ENCODE measurements at regions of chrX and their contacts with region 1.

Region 1: GRCh38 chrX:54029529-54030143 is 14.6 kb downstream of the PHF8 start:
- DNase-seq: no peak
- H3K4me3 ChIP-seq: no peak overlapping the region
- H3K27ac ChIP-seq: no peak overlapping the region
- H3K4me1 ChIP-seq: no peaks in the 10 kb centered on the region
- H3K27me3 ChIP-seq: no peaks in the 10 kb centered on the region
- CTCF ChIP-seq: no peak
- POLR2A ChIP-seq: no peak

Region 2: DNA sequence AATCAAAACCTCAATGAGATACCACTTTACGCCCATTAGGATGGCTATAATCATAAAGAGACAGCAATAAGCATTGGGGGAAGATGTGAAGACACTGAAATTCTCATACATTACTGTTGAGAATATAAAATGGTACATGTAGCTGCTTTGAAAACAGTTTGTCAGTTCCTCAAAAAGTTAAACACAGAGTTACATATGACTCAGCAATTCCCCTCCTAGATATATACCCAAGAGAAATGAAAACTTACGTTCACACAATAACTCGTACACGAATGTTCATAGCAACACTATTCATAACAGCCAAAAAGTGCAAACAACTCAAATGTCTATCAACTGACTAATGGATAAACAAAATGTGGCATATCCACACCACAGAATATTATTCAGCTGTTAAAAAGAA is 22.0 kb before region 1 on chrX:
- CTCF ChIA-PET with region 1: no interaction called
- POLR2A ChIA-PET with region 1: interaction called, 12 read pairs
- dilution Hi-C with region 1: no loop called
- intact Hi-C with region 1: no loop called
- DNase-seq: no peak
- H3K4me3 ChIP-seq: no peak overlapping the region
- H3K27ac ChIP-seq: no peak overlapping the region
- H3K4me1 ChIP-seq: no peaks in the 10 kb centered on the region
- H3K27me3 ChIP-seq: no peaks in the 10 kb centered on the region
- CTCF ChIP-seq: no peak
- POLR2A ChIP-seq: no peak

Measured in endothelial cell of umbilical vein (primary cell).